ENCODE measurements at regions of chr19 and their contacts with region 1.

Region 1: GRCh38 chr19:14412324-14412995 is 6.7 kb downstream of the DDX39A start:
- DNase-seq: no peak
- H3K4me3 ChIP-seq: no peak overlapping the region
- H3K27ac ChIP-seq: no peak overlapping the region
- H3K4me1 ChIP-seq: peaks cover 15% of the 10 kb centered on the region
- H3K27me3 ChIP-seq: no peaks in the 10 kb centered on the region
- CTCF ChIP-seq: no peak

Region 2: DNA sequence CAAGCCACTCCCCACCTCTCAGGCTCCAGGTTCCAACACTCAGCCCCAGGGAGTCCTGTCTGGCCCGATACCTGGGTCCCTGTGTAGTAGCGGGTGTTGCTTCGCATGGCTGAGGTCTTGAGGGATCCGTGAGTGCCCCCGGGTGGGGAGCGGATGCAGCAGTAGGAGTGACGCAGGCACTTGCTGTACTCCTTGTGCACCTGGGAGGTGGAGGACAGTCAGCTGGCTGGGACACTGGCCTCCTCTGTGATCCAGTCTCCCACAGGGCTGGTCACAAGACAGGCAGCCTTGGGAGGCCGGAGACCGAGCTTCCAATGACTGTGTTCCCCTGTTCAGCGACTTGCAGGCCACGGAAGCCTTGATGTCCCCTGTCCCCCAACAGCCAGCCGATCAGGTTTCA is 259.7 kb before region 1 on chr19:
- CTCF ChIA-PET with region 1: interaction called, 14 read pairs
- POLR2A ChIA-PET with region 1: no interaction called
- intact Hi-C with region 1: no loop called
- DNase-seq: no peak
- H3K4me3 ChIP-seq: no peak overlapping the region
- H3K27ac ChIP-seq: no peak overlapping the region
- H3K4me1 ChIP-seq: no peaks in the 10 kb centered on the region
- H3K27me3 ChIP-seq: no peaks in the 10 kb centered on the region
- CTCF ChIP-seq: no peak

Region 3: DNA sequence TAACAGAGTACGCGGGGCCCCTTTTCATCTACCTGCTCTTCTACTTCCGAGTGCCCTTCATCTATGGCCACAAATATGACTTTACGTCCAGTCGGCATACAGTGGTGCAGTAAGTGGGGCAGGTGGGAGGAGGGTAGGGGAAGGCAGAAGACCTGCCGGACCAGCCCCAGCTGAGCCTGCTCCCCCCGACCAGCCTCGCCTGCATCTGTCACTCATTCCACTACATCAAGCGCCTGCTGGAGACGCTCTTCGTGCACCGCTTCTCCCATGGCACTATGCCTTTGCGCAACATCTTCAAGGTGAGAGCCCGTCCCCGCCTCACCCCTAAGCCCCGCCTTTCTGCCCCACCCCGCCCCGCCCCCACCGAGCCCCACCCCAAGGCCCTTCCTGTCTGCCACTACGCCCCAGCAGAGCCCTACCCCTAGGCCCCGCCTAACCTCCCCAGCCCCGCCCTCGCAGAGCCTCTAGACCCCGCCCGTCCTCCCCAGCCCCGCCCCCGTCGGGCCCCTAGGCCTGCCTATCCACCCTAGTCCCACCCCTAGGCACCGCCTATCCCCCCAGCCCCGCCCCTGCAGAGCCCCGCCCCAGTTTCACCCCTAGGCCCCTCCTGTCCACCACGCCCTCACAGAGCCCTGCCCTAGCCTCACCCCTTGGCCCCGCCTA is 151.7 kb after region 1 on chr19:
- CTCF ChIA-PET with region 1: no interaction called
- POLR2A ChIA-PET with region 1: no interaction called
- intact Hi-C with region 1: no loop called
- DNase-seq: peak; percentile 19 to 40
- H3K4me3 ChIP-seq: no peak overlapping the region
- H3K27ac ChIP-seq: no peak overlapping the region
- H3K4me1 ChIP-seq: no peaks in the 10 kb centered on the region
- H3K27me3 ChIP-seq: no peaks in the 10 kb centered on the region
- CTCF ChIP-seq: no peak